ENCODE measurements at regions of chr14 and their contacts with region 1.

Region 1: GRCh38 chr14:76876076-76876475 is 49.9 kb downstream of the LRRC74A start:
- DNase-seq: peak; percentile 60 to 72 (median 65)
- H3K4me3 ChIP-seq: no peak overlapping the region
- H3K27ac ChIP-seq: no peak overlapping the region
- H3K4me1 ChIP-seq: peaks cover 0 to 10% (median 2%) of the 10 kb centered on the region in 4 experiments
- H3K27me3 ChIP-seq: no peaks in the 10 kb centered on the region

Region 2: DNA sequence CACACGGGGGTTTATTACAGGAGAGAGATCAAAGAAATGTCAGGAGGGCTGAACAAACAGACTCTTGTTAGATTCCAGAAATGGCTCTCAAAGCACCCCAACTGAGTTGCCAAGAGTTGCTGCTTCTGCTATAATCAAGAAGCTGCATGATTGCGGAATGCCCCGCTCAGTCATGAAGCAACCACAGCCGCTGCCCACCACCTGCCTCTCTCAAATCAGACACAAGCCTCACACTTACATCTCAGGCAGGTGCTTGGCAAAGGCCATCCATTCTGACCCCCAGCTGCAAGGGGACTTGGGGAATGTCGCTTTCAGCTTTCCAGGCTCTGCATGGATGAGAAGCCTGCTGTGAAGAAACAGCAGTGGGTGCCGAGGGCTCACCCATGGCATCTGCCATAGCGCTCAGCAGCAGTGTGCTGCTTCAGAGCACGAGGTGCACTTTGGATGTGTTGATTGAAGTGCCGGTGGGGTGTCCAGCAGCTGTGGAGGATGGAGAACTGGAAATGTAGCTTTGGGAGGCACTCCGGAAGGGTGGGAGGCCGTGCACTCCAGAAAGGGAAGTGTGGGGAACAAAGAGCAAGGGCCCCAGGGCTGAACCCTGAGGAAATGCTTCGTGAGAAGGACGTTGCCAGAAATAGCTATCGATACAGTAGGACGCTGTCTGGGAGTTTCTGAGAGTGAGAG is 12.2 kb before region 1 on chr14:
- CTCF ChIA-PET with region 1: interaction called, 20 read pairs
- POLR2A ChIA-PET with region 1: no interaction called
- DNase-seq: peak in 2 of 3 donors; percentile 72 to 78
- H3K4me3 ChIP-seq: peak overlapping the region in 1 of 7 experiments; percentile 21
- H3K27ac ChIP-seq: no peak overlapping the region
- H3K4me1 ChIP-seq: peaks cover 0 to 49% (median 25%) of the 10 kb centered on the region in 4 experiments
- H3K27me3 ChIP-seq: no peaks in the 10 kb centered on the region

Region 3: GRCh38 chr14:76901171-76902055 is 25.3 kb after region 1 on chr14:
- CTCF ChIA-PET with region 1: interaction called, 83 read pairs
- POLR2A ChIA-PET with region 1: no interaction called
- DNase-seq: no peak
- H3K4me3 ChIP-seq: no peak overlapping the region
- H3K27ac ChIP-seq: no peak overlapping the region
- H3K4me1 ChIP-seq: peaks cover 0 to 7% (median 4%) of the 10 kb centered on the region in 4 experiments
- H3K27me3 ChIP-seq: no peaks in the 10 kb centered on the region

Region 4: DNA sequence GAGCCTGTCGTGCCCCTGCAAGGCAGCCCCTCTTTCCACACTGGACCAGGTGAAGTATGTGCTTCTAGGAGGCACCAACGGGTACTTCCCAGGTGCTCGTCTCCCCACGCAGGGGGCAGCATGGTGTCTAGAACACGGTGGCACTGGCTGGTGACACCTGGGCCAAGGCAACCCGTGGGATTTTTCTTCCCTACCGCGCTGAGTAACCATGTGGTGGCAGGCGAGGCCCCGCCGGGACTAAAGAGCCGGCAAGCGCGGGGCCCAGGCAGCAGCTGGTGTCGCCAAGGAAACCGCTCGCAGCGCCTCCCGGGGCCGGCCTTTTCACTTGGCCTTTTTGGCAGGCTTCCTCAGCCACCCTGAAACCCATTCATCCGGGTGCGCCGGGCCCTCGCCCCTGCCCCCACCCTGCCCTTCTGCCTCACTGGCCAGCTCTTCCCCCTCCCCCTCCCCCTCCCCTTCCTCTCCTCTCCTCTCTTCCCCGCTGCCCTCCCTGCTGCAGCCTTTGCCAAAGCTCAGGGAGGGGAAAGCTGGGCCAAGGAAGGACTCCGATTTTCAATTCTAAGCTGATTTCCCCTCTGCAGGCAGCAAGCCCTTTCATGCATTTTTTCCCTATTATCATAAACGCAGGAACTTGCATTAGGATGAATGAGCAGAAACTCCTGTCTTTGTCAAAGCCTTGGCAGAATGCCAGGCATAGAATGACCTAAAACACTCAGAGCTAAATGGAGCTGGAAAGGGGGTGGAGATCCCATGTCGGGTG is 71.2 kb after region 1 on chr14:
- CTCF ChIA-PET with region 1: interaction called, 17 read pairs
- POLR2A ChIA-PET with region 1: no interaction called
- DNase-seq: peak; percentile 83 to 90 (median 88)
- H3K4me3 ChIP-seq: peak overlapping the region in 2 of 7 experiments; percentile 12 to 45
- H3K27ac ChIP-seq: no peak overlapping the region
- H3K4me1 ChIP-seq: peaks cover 3 to 37% (median 16%) of the 10 kb centered on the region in 4 experiments
- H3K27me3 ChIP-seq: no peaks in the 10 kb centered on the region

Region 5: GRCh38 chr14:77053046-77053841 is 177.2 kb after region 1 on chr14:
- CTCF ChIA-PET with region 1: interaction called, 791 read pairs
- POLR2A ChIA-PET with region 1: no interaction called
- DNase-seq: peak; percentile 87 to 89 (median 89)
- H3K4me3 ChIP-seq: no peak overlapping the region
- H3K27ac ChIP-seq: no peak overlapping the region
- H3K4me1 ChIP-seq: peaks cover 0 to 22% (median 11%) of the 10 kb centered on the region in 4 experiments
- H3K27me3 ChIP-seq: no peaks in the 10 kb centered on the region

Region 6: DNA sequence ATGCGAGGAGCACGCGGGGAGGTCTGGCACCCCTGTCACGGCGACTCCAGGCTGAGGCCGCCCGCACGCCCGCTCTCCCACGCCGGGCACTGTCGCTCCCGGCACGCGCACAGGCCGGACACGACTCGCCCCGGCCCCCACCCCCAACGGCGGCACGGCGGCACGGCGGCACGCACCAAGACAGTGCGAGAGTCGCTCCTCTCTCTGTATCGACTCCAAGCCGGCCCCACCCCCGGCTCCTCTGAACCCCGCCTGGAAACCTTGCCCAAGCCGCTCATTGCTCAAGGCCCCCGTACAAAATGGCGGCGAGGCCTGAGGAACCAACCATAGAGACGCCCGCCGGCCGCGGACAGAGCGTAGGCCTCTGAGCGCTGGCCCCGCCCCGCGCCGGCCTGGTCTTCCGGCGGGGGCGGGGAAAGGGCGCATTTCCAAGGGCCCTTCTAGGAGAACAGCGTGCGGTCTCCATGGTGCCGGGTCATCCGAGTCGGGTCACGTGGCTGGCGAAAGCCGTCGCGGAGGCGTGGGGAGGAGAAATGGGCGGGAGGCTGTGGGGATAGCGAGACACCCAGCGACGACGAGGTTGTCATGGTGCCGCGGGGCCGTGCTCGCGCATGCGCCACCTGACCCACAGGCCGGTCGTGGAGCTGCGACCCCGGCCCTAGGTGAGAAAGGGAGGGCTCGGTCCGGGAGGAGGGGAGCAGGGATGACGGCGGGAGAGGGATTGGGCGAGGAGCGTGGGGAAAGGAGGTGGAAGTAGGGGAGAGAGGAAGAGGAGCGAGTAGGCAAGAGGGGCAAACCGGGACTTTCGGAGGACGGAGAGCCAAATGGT is 221.8 kb after region 1 on chr14 and contains the start of gene CIPC:
- CTCF ChIA-PET with region 1: interaction called, 61 read pairs
- POLR2A ChIA-PET with region 1: no interaction called
- DNase-seq: peak; percentile 99 to 100 (median 99)
- H3K4me3 ChIP-seq: peak within 1 kb of the TSS; percentile 83 to 98 (median 95)
- H3K27ac ChIP-seq: peak within 1 kb of the TSS; percentile 83 to 95
- H3K4me1 ChIP-seq: peaks cover 2 to 33% (median 22%) of the 10 kb centered on the region in 4 experiments
- H3K27me3 ChIP-seq: no peaks in the 10 kb centered on the region

Region 7: GRCh38 chr14:77124345-77125280 is 248.5 kb after region 1 on chr14:
- CTCF ChIA-PET with region 1: interaction called, 14 read pairs
- POLR2A ChIA-PET with region 1: no interaction called
- DNase-seq: peak in 2 of 3 donors; percentile 67 to 71
- H3K4me3 ChIP-seq: peak overlapping the region in 6 of 7 experiments; percentile 28 to 68 (median 60)
- H3K27ac ChIP-seq: no peak overlapping the region
- H3K4me1 ChIP-seq: peaks cover 0 to 20% (median 15%) of the 10 kb centered on the region in 4 experiments
- H3K27me3 ChIP-seq: peaks cover 0 to 69% (median 43%) of the 10 kb centered on the region in 5 experiments